Naive thymus-derived CD4-positive, alpha-beta T cell (primary cell): ENCODE measurements at regions of chr15 and their contacts with region 1.

Region 1: DNA sequence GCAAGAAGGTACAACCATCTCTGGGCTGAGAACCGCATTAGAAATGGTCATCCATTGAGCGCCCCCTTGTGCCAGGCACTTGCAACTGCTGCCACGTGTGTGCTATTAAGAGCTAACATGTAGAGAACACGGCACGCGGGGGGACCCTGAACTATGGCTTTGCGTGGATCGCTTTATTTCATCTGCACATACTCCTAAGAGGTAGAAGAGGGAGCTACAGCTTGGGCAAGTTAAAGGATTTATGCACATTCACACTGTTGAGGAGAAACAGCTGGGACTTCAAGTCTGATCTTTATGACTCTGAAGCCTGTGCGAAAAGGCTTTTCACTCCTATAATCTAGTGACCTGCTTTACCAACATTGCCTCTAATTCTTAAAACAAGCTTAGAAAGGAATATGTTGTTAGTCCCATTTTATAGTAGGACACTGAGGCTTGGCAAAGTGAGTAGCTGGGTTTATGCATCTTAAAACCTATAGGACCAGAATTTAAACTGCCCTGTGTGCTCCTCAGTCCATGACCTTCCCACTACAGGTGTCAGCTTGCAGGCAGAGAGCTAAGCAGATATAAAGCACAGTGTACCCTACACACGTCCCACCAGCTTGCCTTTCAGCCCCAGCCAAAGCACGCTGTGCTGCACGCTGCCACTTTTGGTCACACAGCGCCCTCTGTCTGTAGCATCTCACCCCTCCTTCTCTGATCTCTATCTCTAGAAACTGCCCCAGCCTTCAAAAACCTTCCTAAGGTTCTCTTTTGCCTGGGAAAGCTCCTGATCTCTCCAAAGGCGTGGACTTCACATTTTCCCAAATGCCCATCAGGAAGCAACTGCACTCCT is 57.8 kb downstream of the STARD5 start:
- DNase-seq: peak; percentile 60 to 81 (median 75)
- ATAC-seq: peak; percentile 92
- H3K4me3 ChIP-seq: peak overlapping the region; percentile 50
- H3K4me3 Mint-ChIP-seq: peak overlapping the region; percentile 75 to 89 (median 81)
- H3K27ac ChIP-seq: no peak overlapping the region
- H3K27ac Mint-ChIP-seq: peak overlapping the region in 5 of 9 donors; percentile 9 to 86 (median 48)
- H3K4me1 ChIP-seq: peaks cover 9 to 25% of the 10 kb centered on the region in 2 donors
- H3K4me1 Mint-ChIP-seq: peaks cover 21 to 43% (median 35%) of the 10 kb centered on the region in 7 donors
- H3K27me3 ChIP-seq: no peaks in the 10 kb centered on the region
- H3K27me3 Mint-ChIP-seq: peaks cover 0 to 13% (median 5%) of the 10 kb centered on the region in 5 donors

Region 2: DNA sequence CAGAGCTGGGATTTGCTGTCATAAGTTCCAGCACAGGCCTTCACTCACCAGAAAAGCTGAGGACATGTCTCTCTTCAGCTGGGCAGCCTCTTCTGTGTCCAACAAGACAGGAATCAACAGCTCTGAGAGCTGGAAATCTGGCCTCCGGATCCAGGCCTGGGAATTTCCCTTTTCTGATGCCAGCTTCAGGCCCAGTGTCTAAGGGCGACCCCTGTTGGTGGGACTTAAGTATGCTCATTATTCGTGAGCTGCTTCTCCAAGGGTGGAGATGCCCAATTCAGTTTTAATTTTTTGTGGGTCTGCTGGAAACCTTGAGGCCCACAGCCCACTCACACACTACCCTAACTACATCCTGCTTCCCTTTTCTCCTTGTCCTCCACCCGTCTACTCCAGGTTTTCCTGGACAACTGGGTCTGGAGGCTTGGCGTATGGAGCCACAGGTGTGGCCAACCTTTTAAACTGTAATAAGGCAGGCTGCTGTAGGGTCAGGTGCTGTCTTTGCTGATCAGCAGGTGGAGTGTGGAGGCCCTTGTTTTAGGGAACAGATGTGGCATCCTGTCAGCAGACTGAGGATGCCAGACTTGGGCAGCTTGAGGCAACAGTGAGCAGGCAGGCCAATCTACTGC is 489.6 kb before region 1 on chr15:
- CTCF ChIA-PET with region 1: no interaction called
- POLR2A ChIA-PET with region 1: no interaction called
- intact Hi-C with region 1: loop called in 1 of 2 experiments (anchors 10 kb)
- DNase-seq: peak in 8 of 9 donors; percentile 13 to 66 (median 37)
- ATAC-seq: peak; percentile 78
- H3K4me3 ChIP-seq: no peak overlapping the region
- H3K4me3 Mint-ChIP-seq: no peak overlapping the region
- H3K27ac ChIP-seq: no peak overlapping the region
- H3K27ac Mint-ChIP-seq: no peak overlapping the region
- H3K4me1 ChIP-seq: no peaks in the 10 kb centered on the region
- H3K4me1 Mint-ChIP-seq: peaks cover 8 to 13% (median 8%) of the 10 kb centered on the region in 7 donors
- H3K27me3 ChIP-seq: peaks cover 4 to 17% of the 10 kb centered on the region in 2 donors
- H3K27me3 Mint-ChIP-seq: peaks cover 24 to 50% (median 28%) of the 10 kb centered on the region in 5 donors

Region 3: DNA sequence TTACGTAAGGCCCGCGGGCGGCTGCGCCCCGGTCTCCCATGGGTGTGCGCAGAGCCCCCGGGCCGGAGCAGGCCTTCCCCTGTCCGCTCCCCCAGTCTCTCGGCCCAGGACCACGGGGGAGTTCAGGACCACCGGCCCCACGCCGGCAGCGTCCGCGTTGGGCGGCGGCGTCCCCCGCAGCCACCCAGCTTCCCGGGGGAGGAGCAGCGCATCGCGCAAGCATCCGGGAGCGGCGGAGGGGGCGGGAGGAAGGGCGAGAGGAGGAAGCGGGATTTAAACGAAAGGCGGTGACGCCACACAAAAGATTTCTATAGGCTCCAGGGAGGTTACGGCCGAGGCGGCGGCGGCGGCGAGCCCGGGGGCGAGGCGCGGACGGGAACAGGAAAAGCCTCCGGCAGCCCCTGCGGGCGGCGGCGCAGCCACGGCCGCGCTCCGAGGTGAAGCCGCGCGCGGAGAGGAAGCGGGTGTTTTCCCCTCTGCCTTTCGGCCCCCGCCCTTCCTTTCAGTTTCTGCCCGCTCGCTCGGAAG is 265.5 kb before region 1 on chr15 and contains the start of gene TLNRD1:
- CTCF ChIA-PET with region 1: interaction called, 3 read pairs
- POLR2A ChIA-PET with region 1: no interaction called
- intact Hi-C with region 1: loop called (anchors 1 kb)
- DNase-seq: peak; percentile 63 to 90 (median 79)
- ATAC-seq: peak; percentile 81
- H3K4me3 ChIP-seq: peak within 1 kb of the TSS; percentile 83
- H3K4me3 Mint-ChIP-seq: peak within 1 kb of the TSS; percentile 91 to 99 (median 96)
- H3K27ac ChIP-seq: peak within 1 kb of the TSS; percentile 91
- H3K27ac Mint-ChIP-seq: peak within 1 kb of the TSS; percentile 94 to 98 (median 97)
- H3K4me1 ChIP-seq: peaks cover 24 to 36% of the 10 kb centered on the region in 2 donors
- H3K4me1 Mint-ChIP-seq: peaks cover 24 to 66% (median 56%) of the 10 kb centered on the region in 7 donors
- H3K27me3 ChIP-seq: no peaks in the 10 kb centered on the region
- H3K27me3 Mint-ChIP-seq: no peaks in the 10 kb centered on the region
- total RNA-seq, gene TLNRD1: 11.5 to 33.0 (median 22.5) TPM

Region 4: DNA sequence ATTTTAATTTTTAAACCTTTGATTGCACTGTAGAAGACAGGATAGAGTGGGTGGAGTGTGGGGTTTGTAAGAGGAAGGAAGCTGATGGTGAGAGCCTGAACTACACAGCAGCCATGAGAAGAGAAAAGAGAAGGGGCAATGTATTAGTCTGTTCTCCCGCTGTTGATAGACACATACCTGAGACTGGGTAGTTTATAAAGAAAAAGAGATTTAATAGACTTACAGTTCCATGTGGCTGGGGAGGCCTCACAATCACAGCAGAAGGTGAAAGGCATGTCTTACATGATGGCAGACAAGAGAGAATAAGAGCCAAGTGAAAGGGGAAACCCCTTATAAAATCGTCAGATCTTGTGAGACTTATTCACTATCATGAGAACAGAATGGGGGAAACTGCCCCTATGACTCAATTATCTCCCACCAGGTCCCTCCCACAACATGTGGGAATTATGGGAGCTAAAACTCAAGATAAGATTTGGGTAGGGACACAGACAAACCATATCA is 20.5 kb after region 1 on chr15:
- CTCF ChIA-PET with region 1: interaction called, 11 read pairs
- POLR2A ChIA-PET with region 1: interaction called, 642 read pairs
- intact Hi-C with region 1: no loop called
- DNase-seq: peak in 7 of 9 donors; percentile 54 to 73 (median 68)
- ATAC-seq: peak; percentile 95
- H3K4me3 ChIP-seq: peak overlapping the region; percentile 49
- H3K4me3 Mint-ChIP-seq: peak overlapping the region; percentile 70 to 86 (median 80)
- H3K27ac ChIP-seq: peak overlapping the region; percentile 72
- H3K27ac Mint-ChIP-seq: peak overlapping the region; percentile 81 to 99 (median 96)
- H3K4me1 ChIP-seq: peaks cover 57 to 80% of the 10 kb centered on the region in 2 donors
- H3K4me1 Mint-ChIP-seq: peaks cover 52 to 98% (median 88%) of the 10 kb centered on the region in 7 donors
- H3K27me3 ChIP-seq: no peaks in the 10 kb centered on the region
- H3K27me3 Mint-ChIP-seq: no peaks in the 10 kb centered on the region

Region 5: GRCh38 chr15:81400640-81401236 is 134.6 kb after region 1 on chr15:
- CTCF ChIA-PET with region 1: interaction called, 21 read pairs
- POLR2A ChIA-PET with region 1: interaction called, 3 read pairs
- intact Hi-C with region 1: loop called (anchors 2 kb)
- DNase-seq: peak in 6 of 9 donors; percentile 20 to 59 (median 52)
- ATAC-seq: peak; percentile 67
- H3K4me3 ChIP-seq: no peak overlapping the region
- H3K4me3 Mint-ChIP-seq: no peak overlapping the region
- H3K27ac ChIP-seq: no peak overlapping the region
- H3K27ac Mint-ChIP-seq: no peak overlapping the region
- H3K4me1 ChIP-seq: no peaks in the 10 kb centered on the region
- H3K4me1 Mint-ChIP-seq: peaks cover 0 to 5% (median 1%) of the 10 kb centered on the region in 7 donors
- H3K27me3 ChIP-seq: peaks cover 0 to 3% of the 10 kb centered on the region in 2 donors
- H3K27me3 Mint-ChIP-seq: peaks cover 0 to 15% (median 0%) of the 10 kb centered on the region in 5 donors

Region 6: GRCh38 chr15:81604713-81605112 is 338.6 kb after region 1 on chr15:
- CTCF ChIA-PET with region 1: no interaction called
- POLR2A ChIA-PET with region 1: no interaction called
- intact Hi-C with region 1: no loop called
- DNase-seq: no peak
- ATAC-seq: no peak
- H3K4me3 ChIP-seq: no peak overlapping the region
- H3K4me3 Mint-ChIP-seq: no peak overlapping the region
- H3K27ac ChIP-seq: no peak overlapping the region
- H3K27ac Mint-ChIP-seq: no peak overlapping the region
- H3K4me1 ChIP-seq: no peaks in the 10 kb centered on the region
- H3K4me1 Mint-ChIP-seq: no peaks in the 10 kb centered on the region
- H3K27me3 ChIP-seq: no peaks in the 10 kb centered on the region
- H3K27me3 Mint-ChIP-seq: peaks cover 0 to 23% (median 13%) of the 10 kb centered on the region in 5 donors